ENCODE measurements at regions of chr9 and their contacts with region 1.

Region 1: DNA sequence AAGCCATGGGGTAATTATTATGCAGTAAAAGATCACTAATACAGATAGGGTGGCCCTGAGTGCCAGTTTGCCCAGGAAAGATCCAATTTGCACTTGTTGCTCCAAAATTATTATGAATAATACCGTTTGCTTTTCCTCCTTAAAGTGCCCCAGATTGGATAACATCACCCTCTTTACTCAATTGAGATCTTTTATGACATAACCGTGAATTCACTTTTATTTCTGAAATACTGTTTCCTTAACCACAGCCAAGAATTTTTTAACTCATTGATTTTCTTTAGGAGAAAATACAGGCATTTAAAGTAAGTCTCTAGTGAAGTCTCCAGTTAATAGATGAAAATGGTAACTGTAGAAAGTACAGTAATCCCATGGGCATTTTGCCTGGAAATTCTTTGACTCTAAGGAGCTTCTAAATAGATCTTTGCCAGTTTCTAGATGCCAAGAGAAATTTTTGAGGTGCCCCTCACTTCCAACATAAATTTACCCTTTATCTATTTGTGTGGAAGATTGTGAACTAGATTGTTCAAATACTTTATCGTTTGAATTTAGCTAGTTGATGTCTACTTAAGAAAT is 99.2 kb downstream of the UHRF2 start:
- DNase-seq: no peak
- H3K4me3 ChIP-seq: no peak overlapping the region
- CTCF ChIP-seq: no peak
- POLR2A ChIP-seq: no peak

Region 2: DNA sequence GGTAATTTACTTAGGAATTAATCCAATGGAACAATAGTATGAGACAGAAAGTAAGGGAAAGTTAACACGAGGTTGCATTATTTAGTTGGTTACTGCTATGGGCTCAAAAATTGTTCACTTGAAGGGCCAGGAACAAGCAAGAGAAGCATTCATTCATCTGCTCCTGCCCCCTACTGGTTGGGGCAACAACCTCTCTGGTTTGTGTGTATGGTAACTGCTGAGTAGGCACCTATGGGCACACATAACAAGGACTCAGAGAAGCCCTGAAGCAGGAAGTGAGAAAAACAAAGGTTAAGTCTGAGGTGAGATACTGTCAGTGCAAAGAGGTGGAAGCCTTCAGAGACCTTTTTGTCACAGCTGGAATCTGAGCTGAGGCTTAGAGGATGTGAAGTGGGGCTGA is 462.4 kb before region 1 on chr9:
- intact Hi-C with region 1: loop called (anchors 5 kb)
- DNase-seq: no peak
- H3K4me3 ChIP-seq: no peak overlapping the region
- CTCF ChIP-seq: no peak
- POLR2A ChIP-seq: no peak

Region 3: DNA sequence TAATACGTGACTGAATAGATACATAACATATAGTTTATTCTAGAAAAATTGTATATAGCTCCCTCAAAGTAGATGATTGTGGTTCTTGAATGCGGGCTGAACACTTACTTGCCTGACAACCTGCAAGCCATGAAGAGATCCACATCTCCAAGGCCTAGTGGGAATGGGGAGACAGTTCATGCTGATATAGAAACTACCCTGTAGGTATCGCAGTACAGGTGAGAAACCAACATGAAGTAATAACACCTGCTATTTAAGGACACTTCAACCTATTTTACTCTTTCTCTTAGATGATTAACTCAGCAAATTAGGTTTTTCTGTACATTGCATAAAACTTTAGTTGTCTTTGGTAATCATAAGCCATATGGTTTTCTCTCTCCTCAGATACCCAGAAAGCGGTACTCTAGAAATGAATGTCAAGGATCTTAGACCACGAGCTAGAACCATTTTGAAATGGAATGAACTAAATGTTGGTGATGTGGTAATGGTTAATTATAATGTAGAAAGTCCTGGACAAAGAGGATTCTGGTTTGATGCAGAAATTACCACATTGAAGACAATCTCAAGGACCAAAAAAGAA is 51.9 kb before region 1 on chr9:
- intact Hi-C with region 1: no loop called
- DNase-seq: no peak
- H3K4me3 ChIP-seq: no peak overlapping the region
- CTCF ChIP-seq: no peak
- POLR2A ChIP-seq: no peak

Region 4: DNA sequence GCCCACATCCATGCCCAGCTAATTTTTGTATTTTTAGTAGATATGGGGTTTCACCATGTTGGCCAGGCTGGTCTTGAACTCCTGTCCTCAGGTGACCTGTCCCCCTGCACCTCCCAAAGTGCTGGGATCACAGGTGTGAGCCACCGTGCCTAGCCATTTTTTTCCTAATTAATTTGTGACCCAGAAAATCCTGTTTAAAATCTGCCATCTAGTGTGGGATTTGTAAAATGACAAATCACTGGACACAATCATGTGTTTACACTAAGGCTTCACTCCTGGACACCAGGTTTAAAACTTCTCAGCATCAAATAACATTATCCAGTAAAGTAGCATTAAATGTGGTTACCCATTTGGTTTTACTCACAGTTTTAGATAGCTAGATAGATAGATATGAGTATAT is 227.0 kb after region 1 on chr9:
- intact Hi-C with region 1: no loop called
- DNase-seq: no peak
- H3K4me3 ChIP-seq: no peak overlapping the region
- CTCF ChIP-seq: no peak
- POLR2A ChIP-seq: no peak